Esophagus muscularis mucosa (tissue), 4 donors: ENCODE measurements at regions of chr19 and their contacts with region 1.

Region 1: DNA sequence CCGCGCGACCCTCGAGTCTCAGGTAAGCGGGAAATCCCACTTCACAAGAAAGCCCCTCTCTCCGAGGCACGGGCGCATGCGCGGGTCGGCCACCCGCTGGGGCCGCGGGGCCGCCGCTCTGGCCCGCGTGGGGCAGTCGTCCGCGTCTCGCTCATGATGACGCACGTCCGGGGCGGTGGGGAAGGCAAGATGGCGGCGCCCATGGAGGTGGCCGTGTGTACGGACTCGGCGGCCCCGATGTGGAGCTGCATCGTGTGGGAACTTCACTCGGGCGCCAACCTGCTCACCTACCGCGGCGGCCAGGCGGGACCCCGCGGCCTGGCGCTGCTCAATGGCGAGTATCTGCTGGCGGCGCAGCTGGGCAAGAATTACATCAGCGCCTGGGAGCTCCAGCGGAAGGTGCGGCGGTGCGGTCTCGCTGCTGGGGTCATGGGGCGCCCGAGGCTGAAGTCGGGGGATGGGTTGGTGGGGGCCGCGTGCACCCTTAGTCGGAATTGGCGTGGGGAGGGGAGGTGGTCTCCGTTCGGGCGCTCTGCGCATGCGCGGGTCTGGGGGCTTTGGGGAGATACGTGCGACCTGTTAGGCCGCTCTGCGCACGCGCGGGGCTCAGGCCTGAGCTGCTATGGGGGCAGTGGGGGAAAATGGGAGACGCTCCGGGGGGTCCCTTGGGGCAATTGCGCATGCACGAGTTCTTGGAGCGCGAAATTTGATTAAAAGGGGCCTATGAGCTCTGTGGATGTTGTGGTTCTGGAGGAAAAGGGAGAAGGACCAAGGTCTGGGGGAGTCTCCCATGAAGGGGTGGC is at the start of gene WDR18:
- DNase-seq: peak; percentile 97
- H3K4me3 ChIP-seq: peak within 1 kb of the TSS; percentile 82 to 98 (median 92)
- H3K27ac ChIP-seq: peak within 1 kb of the TSS; percentile 84 to 88 (median 87)
- H3K4me1 ChIP-seq: peaks cover 24 to 43% (median 32%) of the 10 kb centered on the region in 4 donors
- H3K27me3 ChIP-seq: peaks cover 0 to 9% (median 0%) of the 10 kb centered on the region in 4 donors
- CTCF ChIP-seq: peak in 2 of 3 experiments; percentile 43 to 46
- EP300 ChIP-seq: no peak
- POLR2A ChIP-seq: peak; percentile 35
- total RNA-seq, gene WDR18: 9.9 to 30.3 (median 28.4) TPM

Region 2: GRCh38 chr19:925526-926322 is 58.6 kb before region 1 on chr19 and contains the start of gene ARID3A:
- intact Hi-C with region 1: loop called (anchors 1 kb)
- DNase-seq: peak; percentile 97
- H3K4me3 ChIP-seq: peak within 1 kb of the TSS; percentile 82 to 98 (median 88)
- H3K27ac ChIP-seq: peak within 1 kb of the TSS; percentile 80 to 88 (median 84)
- H3K4me1 ChIP-seq: peaks cover 21 to 57% (median 40%) of the 10 kb centered on the region in 4 donors
- H3K27me3 ChIP-seq: peaks cover 0 to 9% (median 7%) of the 10 kb centered on the region in 4 donors
- CTCF ChIP-seq: no peak
- EP300 ChIP-seq: no peak
- POLR2A ChIP-seq: no peak
- total RNA-seq, gene ARID3A: 2.9 to 8.4 (median 5.0) TPM